HCT116 (cell line): ENCODE measurements at regions of chr3 and their contacts with region 1.

Region 1: DNA sequence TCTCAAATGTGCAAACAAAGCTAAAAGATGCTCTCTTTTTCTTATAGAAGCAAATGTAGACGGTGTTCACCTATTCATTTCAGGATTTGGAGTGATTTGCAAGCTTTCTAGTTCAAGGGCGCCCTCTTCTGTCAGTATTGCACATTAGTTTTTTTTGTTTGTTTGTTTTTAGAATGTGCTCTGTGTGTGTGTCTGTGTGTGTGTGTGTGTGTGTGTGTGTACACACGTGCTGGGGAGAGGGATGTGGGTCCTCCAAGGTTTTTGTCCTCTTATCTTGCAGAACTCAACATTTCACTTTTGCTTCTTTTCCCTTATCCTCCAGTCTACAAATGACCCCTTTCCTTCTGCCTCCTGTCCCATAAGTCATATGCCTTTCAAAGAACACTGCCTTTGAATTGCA is 23.5 kb downstream of the DNAH1 start:
- DNase-seq: peak; percentile 86
- ATAC-seq: peak; percentile 74
- H3K4me3 ChIP-seq: no peak overlapping the region
- H3K27ac ChIP-seq: no peak overlapping the region
- H3K4me1 ChIP-seq: peaks cover 4 to 10% of the 10 kb centered on the region in 2 experiments; a peak in 3 of 4 replicates
- H3K27me3 ChIP-seq: no peaks in the 10 kb centered on the region
- CTCF ChIP-seq: peak; percentile 40 to 94 (median 82); a peak in 5 of 6 replicates
- POLR2A ChIP-seq: no peak
- RAD21 ChIP-seq: peak; percentile 95

Region 2: GRCh38 chr3:51921081-51921578 is 418.5 kb before region 1 on chr3:
- CTCF ChIA-PET with region 1: no interaction called
- POLR2A ChIA-PET with region 1: no interaction called
- RAD21 ChIA-PET with region 1: no interaction called
- intact Hi-C with region 1: no loop called
- DNase-seq: no peak
- ATAC-seq: no peak
- H3K4me3 ChIP-seq: no peak overlapping the region
- H3K27ac ChIP-seq: no peak overlapping the region
- H3K4me1 ChIP-seq: no peaks in the 10 kb centered on the region
- H3K27me3 ChIP-seq: no peaks in the 10 kb centered on the region
- CTCF ChIP-seq: no peak
- POLR2A ChIP-seq: no peak
- RAD21 ChIP-seq: no peak

Region 3: DNA sequence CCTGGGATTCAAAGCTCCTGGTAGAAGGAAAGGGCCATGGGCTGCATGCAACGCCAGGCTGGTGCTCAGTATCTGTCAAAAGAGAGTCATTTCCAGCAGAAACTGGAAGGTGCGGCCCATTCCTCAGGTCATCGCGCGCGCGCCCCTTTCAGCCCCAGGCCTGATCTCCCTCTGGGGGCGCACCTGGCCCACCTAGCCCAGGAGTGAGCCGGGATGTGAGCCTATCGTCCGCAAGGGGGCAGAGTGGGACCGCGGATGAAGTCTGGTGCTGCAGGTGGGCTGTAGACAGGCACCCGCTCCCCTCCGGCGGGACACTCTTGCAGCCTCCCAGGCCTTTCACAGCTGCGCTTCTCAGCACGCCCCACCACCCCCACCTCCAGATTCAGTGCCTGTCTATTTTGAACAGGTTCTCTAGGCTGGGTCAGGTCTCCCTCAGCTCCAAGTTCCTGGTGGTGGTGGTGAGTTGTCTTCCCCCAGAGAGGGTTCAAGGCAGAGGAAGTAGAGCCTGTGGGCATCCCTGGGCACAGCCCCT is 338.1 kb before region 1 on chr3:
- CTCF ChIA-PET with region 1: interaction called, 5 read pairs
- POLR2A ChIA-PET with region 1: no interaction called
- RAD21 ChIA-PET with region 1: interaction called in 1 of 2 experiments, 3 read pairs
- intact Hi-C with region 1: loop called (anchors 5 kb)
- DNase-seq: peak; percentile 59
- ATAC-seq: peak; percentile 96
- H3K4me3 ChIP-seq: no peak overlapping the region
- H3K27ac ChIP-seq: no peak overlapping the region; the same call in 1 of the 2 replicates
- H3K4me1 ChIP-seq: peaks cover 11 to 35% of the 10 kb centered on the region in 2 experiments
- H3K27me3 ChIP-seq: no peaks in the 10 kb centered on the region
- CTCF ChIP-seq: peak in 2 of 3 experiments; percentile 95 to 98; a peak in 4 of 6 replicates
- POLR2A ChIP-seq: no peak
- RAD21 ChIP-seq: no peak

Region 4: GRCh38 chr3:52231502-52232293 is 107.9 kb before region 1 on chr3:
- CTCF ChIA-PET with region 1: interaction called, 37 read pairs
- POLR2A ChIA-PET with region 1: no interaction called
- RAD21 ChIA-PET with region 1: no interaction called
- intact Hi-C with region 1: loop called (anchors 1 kb)
- DNase-seq: no peak
- ATAC-seq: peak; percentile 75
- H3K4me3 ChIP-seq: no peak overlapping the region
- H3K27ac ChIP-seq: no peak overlapping the region
- H3K4me1 ChIP-seq: peaks cover 3 to 6% of the 10 kb centered on the region in 2 experiments; a peak in 3 of 4 replicates
- H3K27me3 ChIP-seq: no peaks in the 10 kb centered on the region
- CTCF ChIP-seq: peak in 2 of 3 experiments; percentile 92 to 97; a peak in 4 of 6 replicates
- POLR2A ChIP-seq: no peak
- RAD21 ChIP-seq: no peak

Region 5: DNA sequence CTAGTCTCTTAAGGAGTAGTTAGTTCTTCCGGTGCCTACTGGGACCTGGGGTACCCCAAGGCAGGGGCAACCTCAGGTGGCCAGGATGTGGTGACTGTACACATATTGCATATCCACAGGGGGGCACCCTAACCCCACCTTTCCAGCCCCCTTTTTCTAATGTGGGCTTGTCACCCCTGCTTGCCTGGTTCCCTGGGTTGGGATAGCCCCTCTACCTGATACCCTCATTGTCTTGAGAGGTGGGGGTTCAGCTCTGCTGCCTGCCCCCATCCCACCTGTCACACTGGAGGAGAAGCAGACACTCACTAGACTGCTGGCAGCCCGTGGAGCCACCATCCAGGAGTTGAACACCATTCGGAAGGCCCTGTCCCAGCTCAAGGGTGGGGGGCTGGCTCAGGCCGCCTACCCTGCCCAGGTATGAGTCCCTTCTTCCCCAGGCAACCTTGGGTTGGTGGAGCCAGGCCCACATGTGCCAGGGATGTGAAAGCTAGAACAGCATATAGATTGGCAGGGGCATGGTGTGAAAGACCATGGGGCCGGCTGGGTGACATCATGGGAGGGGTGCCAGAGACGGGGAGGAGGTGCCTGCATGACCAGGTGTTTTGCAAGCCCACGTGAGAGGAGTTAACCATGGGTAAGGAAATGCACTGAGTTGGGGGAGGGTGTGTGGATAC is 48.0 kb before region 1 on chr3:
- CTCF ChIA-PET with region 1: interaction called, 6 read pairs
- POLR2A ChIA-PET with region 1: no interaction called
- RAD21 ChIA-PET with region 1: no interaction called
- intact Hi-C with region 1: loop called (anchors 1 kb)
- DNase-seq: no peak
- ATAC-seq: peak; percentile 32; the same call in 1 of the 2 replicates
- H3K4me3 ChIP-seq: no peak overlapping the region
- H3K27ac ChIP-seq: no peak overlapping the region
- H3K4me1 ChIP-seq: peaks cover 5 to 11% of the 10 kb centered on the region in 2 experiments
- H3K27me3 ChIP-seq: no peaks in the 10 kb centered on the region
- CTCF ChIP-seq: peak; percentile 44 to 81 (median 69)
- POLR2A ChIP-seq: no peak
- RAD21 ChIP-seq: peak; percentile 87

Region 6: DNA sequence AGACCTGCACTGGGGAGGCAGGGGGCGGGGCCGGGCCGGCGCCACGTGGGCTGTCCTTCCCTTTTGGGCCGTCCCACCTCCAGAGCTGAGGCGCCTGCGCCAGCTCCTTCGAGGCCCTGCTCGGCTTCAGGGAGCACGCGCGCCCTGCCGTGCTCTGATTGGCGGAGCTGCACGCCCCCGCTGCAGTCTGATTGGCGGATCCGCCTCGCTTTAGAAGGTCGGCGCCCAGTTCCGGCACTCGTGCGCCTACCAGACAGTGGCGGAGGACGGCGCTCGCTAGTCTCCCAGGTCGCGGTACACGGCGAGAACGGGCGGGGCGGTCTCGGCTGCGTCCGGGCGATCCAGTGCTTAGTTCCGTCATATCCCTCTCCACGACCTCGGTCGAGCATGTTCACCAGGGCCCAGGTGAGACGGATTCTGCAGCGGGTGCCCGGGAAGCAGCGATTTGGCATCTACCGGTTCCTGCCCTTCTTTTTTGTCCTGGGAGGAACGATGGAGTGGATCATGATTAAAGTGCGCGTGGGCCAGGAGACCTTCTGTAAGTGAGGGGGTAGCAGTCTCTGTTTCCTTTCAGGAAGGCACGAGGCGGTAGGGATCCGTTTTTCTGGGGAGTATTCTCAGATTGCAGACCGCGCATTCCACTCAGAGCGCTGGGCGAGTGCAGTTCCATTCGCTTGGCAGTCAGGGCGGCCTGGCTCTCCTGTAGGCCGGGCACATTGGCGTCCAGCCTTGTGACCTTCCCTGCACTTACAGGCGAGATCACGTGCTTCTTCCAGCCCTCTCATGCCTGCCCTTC is 197.0 kb after region 1 on chr3 and contains the start of gene UQCC5:
- CTCF ChIA-PET with region 1: no interaction called
- POLR2A ChIA-PET with region 1: no interaction called
- RAD21 ChIA-PET with region 1: no interaction called
- intact Hi-C with region 1: no loop called
- DNase-seq: peak; percentile 96
- ATAC-seq: peak; percentile 88
- H3K4me3 ChIP-seq: peak within 1 kb of the TSS; percentile 86 to 93
- H3K27ac ChIP-seq: peak within 1 kb of the TSS; percentile 79
- H3K4me1 ChIP-seq: peaks cover 14 to 37% of the 10 kb centered on the region in 2 experiments; a peak in 3 of 4 replicates
- H3K27me3 ChIP-seq: no peaks in the 10 kb centered on the region
- CTCF ChIP-seq: no peak
- POLR2A ChIP-seq: peak; percentile 86
- RAD21 ChIP-seq: no peak
- total RNA-seq, gene UQCC5: 14.1 TPM

Region 7: DNA sequence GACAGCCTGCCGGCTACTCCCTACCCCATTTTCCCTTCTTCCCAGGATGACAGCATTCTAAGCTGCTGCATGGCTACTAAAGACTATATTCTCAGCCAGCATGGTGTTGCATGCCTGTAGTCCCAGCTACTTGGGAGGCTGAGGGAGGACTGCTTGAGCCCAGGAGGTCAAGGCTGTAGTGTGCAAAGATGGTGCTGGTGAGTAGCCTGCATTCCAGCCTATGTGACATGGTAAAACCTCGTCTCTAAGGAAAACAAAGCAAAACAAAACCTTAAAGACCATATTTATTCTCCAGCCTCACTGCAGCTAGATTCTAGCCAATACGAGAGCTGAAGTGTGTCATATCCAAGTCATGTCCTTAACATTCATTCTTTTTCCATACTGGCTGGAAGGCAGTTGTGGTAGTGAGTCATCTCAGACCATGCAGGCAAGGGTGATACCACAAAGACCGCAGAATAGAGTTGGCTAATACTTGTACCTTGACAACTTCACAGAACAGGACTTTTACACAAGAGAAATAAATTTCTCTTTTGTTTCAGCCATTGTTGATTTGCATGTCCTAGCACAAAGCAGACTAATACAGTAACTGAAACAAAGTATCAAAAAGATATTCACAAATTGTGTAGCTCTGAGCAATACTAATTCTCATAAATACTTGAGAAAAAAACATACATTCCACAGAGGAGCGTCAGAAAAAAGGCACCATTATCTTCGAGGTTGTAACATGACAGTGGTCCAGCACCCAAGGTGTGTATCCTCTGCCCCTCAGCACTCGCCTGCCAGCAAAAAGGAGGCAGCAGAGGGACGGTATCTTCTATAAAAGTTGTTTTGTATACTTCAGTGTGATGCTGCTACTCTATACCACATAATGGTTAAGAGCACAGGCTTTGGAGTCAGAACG is 331.3 kb after region 1 on chr3:
- CTCF ChIA-PET with region 1: no interaction called
- POLR2A ChIA-PET with region 1: no interaction called
- RAD21 ChIA-PET with region 1: no interaction called
- intact Hi-C with region 1: no loop called
- DNase-seq: peak; percentile 96
- ATAC-seq: peak; percentile 96
- H3K4me3 ChIP-seq: peak overlapping the region in 1 of 2 experiments; percentile 28; a peak in 2 of 4 replicates
- H3K27ac ChIP-seq: peak overlapping the region; percentile 81
- H3K4me1 ChIP-seq: peaks cover 24 to 31% of the 10 kb centered on the region in 2 experiments
- H3K27me3 ChIP-seq: no peaks in the 10 kb centered on the region
- CTCF ChIP-seq: no peak
- POLR2A ChIP-seq: no peak
- RAD21 ChIP-seq: peak; percentile 21; the same call in 1 of the 2 replicates